ENCODE measurements at regions of chr9 and their contacts with region 1.

Region 1: GRCh38 chr9:92669890-92670708 is at the start of gene IPPK:
- DNase-seq: peak; percentile 98
- H3K4me3 Mint-ChIP-seq: peak within 1 kb of the TSS; percentile 88
- H3K27ac Mint-ChIP-seq: peak within 1 kb of the TSS; percentile 88
- H3K4me1 Mint-ChIP-seq: peaks cover 38% of the 10 kb centered on the region
- H3K27me3 Mint-ChIP-seq: no peaks in the 10 kb centered on the region
- total RNA-seq, gene IPPK: 14.8 and 14.9 TPM in 2 replicates

Region 2: GRCh38 chr9:92293452-92294296 is 376.4 kb before region 1 on chr9 and contains the start of gene IARS1:
- intact Hi-C with region 1: loop called (anchors 1 kb)
- DNase-seq: peak; percentile 100
- H3K4me3 Mint-ChIP-seq: peak within 1 kb of the TSS; percentile 98
- H3K27ac Mint-ChIP-seq: peak within 1 kb of the TSS; percentile 98
- H3K4me1 Mint-ChIP-seq: peaks cover 64% of the 10 kb centered on the region
- H3K27me3 Mint-ChIP-seq: no peaks in the 10 kb centered on the region
- total RNA-seq, gene IARS1: 208 and 217 TPM in 2 replicates

Region 3: DNA sequence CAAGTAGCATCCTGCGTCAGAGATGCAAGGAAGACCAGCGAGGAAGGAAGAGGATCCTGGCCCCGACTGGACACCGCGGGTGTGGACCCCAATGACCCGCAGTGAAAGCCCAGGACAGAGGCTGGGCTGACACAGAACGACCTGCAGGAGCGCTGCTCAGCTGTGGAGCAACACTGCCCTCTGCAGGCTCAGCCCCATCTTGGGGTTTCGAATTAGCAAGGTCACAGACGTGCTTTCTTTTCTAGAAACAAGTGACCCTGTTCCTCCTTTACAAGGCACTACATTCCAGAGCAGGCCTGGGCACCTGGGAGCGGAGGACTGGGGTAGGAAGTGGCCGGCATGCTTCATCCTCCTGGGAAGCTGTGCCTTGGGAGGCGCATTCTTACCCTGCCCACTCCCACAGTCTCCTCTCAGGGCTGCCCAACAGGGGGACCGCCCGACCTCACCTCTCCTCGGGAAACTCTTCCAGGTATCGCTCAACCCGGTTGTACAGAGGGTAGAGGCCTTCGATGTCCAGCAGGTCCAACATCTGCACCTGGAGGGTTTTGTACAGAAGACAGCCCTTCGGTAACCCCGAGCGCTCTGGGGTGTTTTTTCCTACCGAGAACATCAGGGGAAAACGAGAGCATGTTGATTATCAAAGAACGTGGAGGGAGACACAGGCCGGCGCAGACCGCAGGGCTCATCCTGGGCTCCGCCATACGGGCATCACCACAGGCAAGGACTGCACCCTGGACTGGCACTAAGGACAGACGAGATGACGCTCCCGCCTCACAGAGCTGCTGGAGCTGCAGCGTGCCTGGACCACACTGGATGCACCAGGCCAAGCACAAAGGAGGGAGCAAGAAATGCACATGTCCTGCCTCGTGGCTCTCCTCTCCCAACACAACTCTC is 35.1 kb before region 1 on chr9:
- intact Hi-C with region 1: loop called (anchors 5 kb)
- DNase-seq: peak; percentile 43
- H3K4me3 Mint-ChIP-seq: no peak overlapping the region
- H3K27ac Mint-ChIP-seq: peak overlapping the region; percentile 71
- H3K4me1 Mint-ChIP-seq: peaks cover 24% of the 10 kb centered on the region
- H3K27me3 Mint-ChIP-seq: no peaks in the 10 kb centered on the region

Region 4: GRCh38 chr9:92706216-92706940 is 36.3 kb after region 1 on chr9:
- intact Hi-C with region 1: loop called (anchors 2 kb)
- DNase-seq: peak; percentile 32
- H3K4me3 Mint-ChIP-seq: no peak overlapping the region
- H3K27ac Mint-ChIP-seq: peak overlapping the region; percentile 9
- H3K4me1 Mint-ChIP-seq: peaks cover 21% of the 10 kb centered on the region
- H3K27me3 Mint-ChIP-seq: no peaks in the 10 kb centered on the region

Region 5: GRCh38 chr9:92954049-92954861 is 284.2 kb after region 1 on chr9:
- intact Hi-C with region 1: loop called (anchors 1 kb)
- DNase-seq: peak; percentile 73
- H3K4me3 Mint-ChIP-seq: peak overlapping the region; percentile 49
- H3K27ac Mint-ChIP-seq: peak overlapping the region; percentile 88
- H3K4me1 Mint-ChIP-seq: peaks cover 56% of the 10 kb centered on the region
- H3K27me3 Mint-ChIP-seq: peaks cover 4% of the 10 kb centered on the region

Region 6: DNA sequence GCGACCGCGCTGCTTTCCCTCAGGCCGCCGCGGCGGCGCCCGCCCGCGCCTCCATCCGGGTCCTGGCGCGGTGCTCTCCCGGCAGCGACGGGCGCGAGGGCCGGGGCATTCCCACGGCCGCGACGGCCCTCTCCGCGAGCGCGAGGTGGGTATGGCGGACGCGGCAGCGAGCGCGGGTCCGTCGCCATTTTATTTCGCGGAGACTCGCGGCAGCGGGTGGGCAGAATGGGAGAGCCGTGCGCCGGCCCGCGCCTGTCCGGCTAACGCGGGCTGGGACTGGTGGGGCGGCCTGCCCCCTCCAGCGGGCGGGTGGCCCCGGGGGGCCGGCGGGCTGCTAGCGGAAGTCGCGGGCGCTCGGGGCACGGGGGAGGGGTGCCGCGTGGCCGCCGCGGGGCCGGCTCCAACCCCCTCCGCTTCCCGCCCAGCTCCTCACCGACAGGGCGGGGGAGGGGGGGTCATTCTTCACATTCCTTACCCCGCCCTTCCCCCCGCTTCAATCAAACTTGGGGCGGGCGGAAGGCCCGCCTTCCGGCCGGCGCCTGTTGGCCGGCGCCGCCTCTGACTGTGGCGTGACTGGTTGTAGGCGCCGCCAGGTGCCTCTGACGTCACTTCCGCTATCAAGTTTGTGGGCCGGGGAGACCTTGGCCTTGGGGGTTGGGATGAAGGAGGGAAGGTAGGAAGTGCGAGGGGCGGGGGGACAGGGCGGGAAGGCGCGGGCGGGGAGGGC is 1496.3 kb after region 1 on chr9:
- intact Hi-C with region 1: loop called (anchors 2 kb)
- DNase-seq: peak; percentile 92
- H3K4me3 Mint-ChIP-seq: peak overlapping the region; percentile 95
- H3K27ac Mint-ChIP-seq: peak overlapping the region; percentile 89
- H3K4me1 Mint-ChIP-seq: peaks cover 46% of the 10 kb centered on the region
- H3K27me3 Mint-ChIP-seq: peaks cover 2% of the 10 kb centered on the region